Dorsolateral prefrontal cortex (tissue), 120 donors: ENCODE measurements at regions of chr1 and their contacts with region 1.

Region 1: GRCh38 chr1:241499910-241500309 is 19.6 kb downstream of the FH start:
- DNase-seq: peak in 1 of 10 donors; percentile 41
- H3K4me3 ChIP-seq: no peak overlapping the region
- H3K27ac ChIP-seq: no peak overlapping the region
- H3K27me3 ChIP-seq: no peaks in the 10 kb centered on the region
- CTCF ChIP-seq: peak in 54 of 56 donors; percentile 24 to 81 (median 58)

Region 2: GRCh38 chr1:240732390-240732789 is 767.5 kb before region 1 on chr1:
- intact Hi-C with region 1: loop called (anchors 10 kb)
- DNase-seq: no peak
- H3K4me3 ChIP-seq: no peak overlapping the region
- H3K27ac ChIP-seq: no peak overlapping the region
- H3K27me3 ChIP-seq: no peaks in the 10 kb centered on the region
- CTCF ChIP-seq: peak; percentile 44 to 83 (median 68)

Region 3: GRCh38 chr1:240888039-240888786 is 611.7 kb before region 1 on chr1:
- intact Hi-C with region 1: loop called in 1 of 2 experiments (anchors 5 kb)
- DNase-seq: peak in 2 of 10 donors; percentile 44 to 74
- H3K4me3 ChIP-seq: no peak overlapping the region
- H3K27ac ChIP-seq: no peak overlapping the region
- H3K27me3 ChIP-seq: no peaks in the 10 kb centered on the region
- CTCF ChIP-seq: peak in 55 of 56 donors; percentile 31 to 75 (median 58)

Region 4: GRCh38 chr1:241391926-241392710 is 107.8 kb before region 1 on chr1:
- intact Hi-C with region 1: no loop called
- DNase-seq: no peak
- H3K4me3 ChIP-seq: no peak overlapping the region
- H3K27ac ChIP-seq: no peak overlapping the region
- H3K27me3 ChIP-seq: no peaks in the 10 kb centered on the region
- CTCF ChIP-seq: no peak

Region 5: GRCh38 chr1:241658081-241658793 is 158.3 kb after region 1 on chr1:
- intact Hi-C with region 1: no loop called
- DNase-seq: no peak
- H3K4me3 ChIP-seq: no peak overlapping the region
- H3K27ac ChIP-seq: no peak overlapping the region
- H3K27me3 ChIP-seq: no peaks in the 10 kb centered on the region
- CTCF ChIP-seq: no peak